ENCODE measurements at regions of chr1 and their contacts with region 1.

Region 1: GRCh38 chr1:30327370-30328099 is 395.9 kb downstream of the MATN1 start:
- DNase-seq: peak; percentile 59

Region 2: GRCh38 chr1:30372792-30373433 is 45.4 kb after region 1 on chr1:
- intact Hi-C with region 1: loop called in 1 of 2 experiments (anchors 1 kb)
- DNase-seq: no peak

Measured in posterior vena cava (tissue), 2 donors.